Activated CD4-positive, alpha-beta T cell treated with anti-CD3 and anti-CD28 coated beads for 36 hours (primary cell): ENCODE measurements at regions of chr12 and their contacts with region 1.

Region 1: GRCh38 chr12:2733477-2734355 is 61.1 kb upstream of the FKBP4 start:
- DNase-seq: no peak
- ATAC-seq: no peak
- H3K4me3 Mint-ChIP-seq: no peak overlapping the region
- H3K27ac Mint-ChIP-seq: no peak overlapping the region
- H3K4me1 Mint-ChIP-seq: peaks cover 8% of the 10 kb centered on the region
- H3K27me3 Mint-ChIP-seq: peaks cover 17% of the 10 kb centered on the region

Region 2: DNA sequence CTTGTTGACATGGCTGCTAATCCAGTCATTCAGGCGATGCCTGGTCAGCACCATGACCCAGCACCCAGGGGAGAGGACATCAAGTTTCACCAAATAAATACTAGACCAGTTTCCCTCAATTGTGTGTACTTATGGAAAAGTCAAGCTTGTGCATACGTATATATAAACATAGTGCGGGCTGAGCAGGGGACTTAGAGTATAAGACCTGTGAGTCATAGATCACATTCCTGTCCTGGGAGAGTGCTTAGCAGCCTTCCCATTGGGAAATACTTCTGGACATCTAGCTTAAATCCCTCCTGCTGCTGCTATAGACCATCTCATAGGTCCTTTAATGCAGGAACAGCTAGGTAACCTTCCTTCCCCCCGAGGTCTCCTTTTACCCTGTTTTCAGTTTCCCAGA is 809.2 kb after region 1 on chr12:
- CTCF ChIA-PET with region 1: no interaction called
- POLR2A ChIA-PET with region 1: interaction called, 12 read pairs
- intact Hi-C with region 1: no loop called
- DNase-seq: no peak
- ATAC-seq: no peak
- H3K4me3 Mint-ChIP-seq: no peak overlapping the region
- H3K27ac Mint-ChIP-seq: no peak overlapping the region
- H3K4me1 Mint-ChIP-seq: no peaks in the 10 kb centered on the region
- H3K27me3 Mint-ChIP-seq: peaks cover 8% of the 10 kb centered on the region